ENCODE measurements at regions of chr7 and their contacts with region 1.

Region 1: GRCh38 chr7:2670720-2671391 is 17.1 kb upstream of the AMZ1 start:
- DNase-seq: peak; percentile 50 to 79 (median 54)
- H3K4me3 ChIP-seq: no peak overlapping the region
- H3K4me3 Mint-ChIP-seq: peak overlapping the region in 1 of 7 donors; percentile 39
- H3K27ac ChIP-seq: no peak overlapping the region
- H3K27ac Mint-ChIP-seq: peak overlapping the region in 2 of 8 donors; percentile 17 to 33
- H3K4me1 ChIP-seq: no peaks in the 10 kb centered on the region
- H3K4me1 Mint-ChIP-seq: peaks cover 5 to 8% (median 7%) of the 10 kb centered on the region in 3 donors
- H3K27me3 ChIP-seq: no peaks in the 10 kb centered on the region
- H3K27me3 Mint-ChIP-seq: peaks cover 15 to 28% of the 10 kb centered on the region in 2 donors

Region 2: GRCh38 chr7:2680792-2681490 is 10.1 kb after region 1 on chr7:
- CTCF ChIA-PET with region 1: interaction called, 13 read pairs
- POLR2A ChIA-PET with region 1: no interaction called
- DNase-seq: peak; percentile 21 to 63 (median 26)
- H3K4me3 ChIP-seq: no peak overlapping the region
- H3K4me3 Mint-ChIP-seq: no peak overlapping the region
- H3K27ac ChIP-seq: no peak overlapping the region
- H3K27ac Mint-ChIP-seq: no peak overlapping the region
- H3K4me1 ChIP-seq: no peaks in the 10 kb centered on the region
- H3K4me1 Mint-ChIP-seq: no peaks in the 10 kb centered on the region
- H3K27me3 ChIP-seq: peaks cover 2% of the 10 kb centered on the region
- H3K27me3 Mint-ChIP-seq: peaks cover 5 to 10% of the 10 kb centered on the region in 2 donors

Region 3: DNA sequence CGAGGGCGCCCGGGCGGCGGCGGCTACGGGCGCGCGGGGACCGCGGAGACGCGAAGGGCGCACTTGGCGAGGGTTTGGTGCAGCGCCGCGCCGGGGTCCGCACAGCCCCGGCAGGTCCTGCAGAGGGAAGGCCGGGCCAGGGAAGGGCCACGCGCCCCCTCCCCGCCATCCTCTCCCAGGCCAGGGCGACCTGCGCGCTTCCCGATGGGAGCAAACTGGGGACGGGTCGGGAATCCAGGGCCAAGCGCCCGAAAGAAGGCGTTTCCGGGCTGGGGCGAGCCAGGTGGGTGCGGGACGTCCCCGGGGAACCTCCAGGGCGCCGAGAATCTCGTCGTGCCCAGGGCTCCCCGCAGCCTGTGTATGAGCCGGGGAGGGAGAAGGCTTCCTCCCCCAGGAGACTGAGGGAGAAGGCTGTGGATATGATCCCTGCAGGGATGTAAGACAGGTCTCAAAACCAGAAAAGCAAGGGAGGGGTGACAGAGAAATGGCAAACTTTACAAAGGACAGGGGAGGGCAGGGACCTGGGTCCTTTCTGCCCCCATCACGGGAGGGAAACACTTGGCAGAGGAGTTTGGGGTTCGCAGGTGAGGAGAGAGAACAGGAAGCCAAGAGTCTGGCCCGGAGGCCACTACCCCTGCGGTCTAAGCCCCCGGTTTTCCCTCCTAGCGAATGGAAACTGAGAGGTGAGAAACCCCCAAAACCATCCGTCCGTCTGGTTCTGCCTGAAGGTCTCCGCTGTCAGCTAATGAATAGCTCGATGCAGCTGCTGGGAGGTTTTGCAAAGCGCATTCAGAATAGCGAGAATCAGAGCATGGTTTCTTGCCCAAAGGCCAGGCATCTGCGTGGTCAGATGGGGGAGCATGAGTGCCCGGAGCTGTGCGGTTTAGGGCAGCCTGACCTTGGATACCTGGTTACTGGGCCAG is 17.8 kb after region 1 on chr7:
- CTCF ChIA-PET with region 1: interaction called, 11 read pairs
- POLR2A ChIA-PET with region 1: no interaction called
- DNase-seq: no peak
- H3K4me3 ChIP-seq: no peak overlapping the region
- H3K4me3 Mint-ChIP-seq: peak overlapping the region in 6 of 7 donors; percentile 16 to 85 (median 54)
- H3K27ac ChIP-seq: no peak overlapping the region
- H3K27ac Mint-ChIP-seq: peak overlapping the region in 2 of 8 donors; percentile 17 to 78
- H3K4me1 ChIP-seq: peaks cover 10% of the 10 kb centered on the region
- H3K4me1 Mint-ChIP-seq: peaks cover 11 to 22% (median 13%) of the 10 kb centered on the region in 3 donors
- H3K27me3 ChIP-seq: peaks cover 26% of the 10 kb centered on the region
- H3K27me3 Mint-ChIP-seq: peaks cover 37 to 48% of the 10 kb centered on the region in 2 donors

Region 4: DNA sequence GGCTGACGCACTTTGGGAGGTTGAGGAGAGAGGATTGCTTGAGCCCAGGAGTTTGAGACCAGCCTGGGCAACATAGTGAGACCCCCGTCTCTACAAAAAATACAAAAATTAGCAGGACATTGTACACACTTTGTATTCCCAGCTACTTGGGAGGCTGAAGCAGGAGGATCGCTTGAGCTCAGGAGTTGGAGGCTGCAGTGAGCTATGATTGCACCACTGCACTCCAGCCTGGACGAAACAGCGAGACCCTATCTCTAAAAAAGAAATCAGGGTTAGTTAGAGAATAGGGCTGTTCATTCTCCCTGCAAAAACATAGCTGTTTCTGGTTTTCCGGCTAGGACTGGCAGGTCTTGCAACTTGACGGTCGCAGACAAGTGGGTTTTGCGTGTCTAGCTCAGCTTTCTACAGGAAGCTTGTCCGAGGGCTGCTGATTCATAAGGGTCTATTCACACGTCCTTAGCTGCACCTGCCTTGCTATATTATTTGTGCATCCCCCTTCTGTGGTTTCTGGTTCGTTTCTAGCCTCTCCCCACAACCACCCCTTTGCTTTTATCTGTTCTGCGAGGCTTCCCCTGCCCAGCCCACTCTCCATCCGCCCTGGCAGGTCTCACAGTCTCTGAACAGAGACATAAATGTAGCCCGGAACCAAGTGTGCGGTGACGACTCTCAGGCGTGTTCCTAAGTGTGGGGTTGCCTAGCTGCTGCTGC is 27.9 kb after region 1 on chr7:
- CTCF ChIA-PET with region 1: interaction called, 10 read pairs
- POLR2A ChIA-PET with region 1: no interaction called
- DNase-seq: peak; percentile 38 to 90 (median 70)
- H3K4me3 ChIP-seq: no peak overlapping the region
- H3K4me3 Mint-ChIP-seq: peak overlapping the region; percentile 11 to 81 (median 66)
- H3K27ac ChIP-seq: no peak overlapping the region
- H3K27ac Mint-ChIP-seq: peak overlapping the region; percentile 8 to 89 (median 73)
- H3K4me1 ChIP-seq: peaks cover 22% of the 10 kb centered on the region
- H3K4me1 Mint-ChIP-seq: peaks cover 20 to 31% (median 22%) of the 10 kb centered on the region in 3 donors
- H3K27me3 ChIP-seq: no peaks in the 10 kb centered on the region
- H3K27me3 Mint-ChIP-seq: no peaks in the 10 kb centered on the region